Gastrocnemius medialis (tissue), 4 donors: ENCODE measurements at regions of chr21 and their contacts with region 1.

Region 1: DNA sequence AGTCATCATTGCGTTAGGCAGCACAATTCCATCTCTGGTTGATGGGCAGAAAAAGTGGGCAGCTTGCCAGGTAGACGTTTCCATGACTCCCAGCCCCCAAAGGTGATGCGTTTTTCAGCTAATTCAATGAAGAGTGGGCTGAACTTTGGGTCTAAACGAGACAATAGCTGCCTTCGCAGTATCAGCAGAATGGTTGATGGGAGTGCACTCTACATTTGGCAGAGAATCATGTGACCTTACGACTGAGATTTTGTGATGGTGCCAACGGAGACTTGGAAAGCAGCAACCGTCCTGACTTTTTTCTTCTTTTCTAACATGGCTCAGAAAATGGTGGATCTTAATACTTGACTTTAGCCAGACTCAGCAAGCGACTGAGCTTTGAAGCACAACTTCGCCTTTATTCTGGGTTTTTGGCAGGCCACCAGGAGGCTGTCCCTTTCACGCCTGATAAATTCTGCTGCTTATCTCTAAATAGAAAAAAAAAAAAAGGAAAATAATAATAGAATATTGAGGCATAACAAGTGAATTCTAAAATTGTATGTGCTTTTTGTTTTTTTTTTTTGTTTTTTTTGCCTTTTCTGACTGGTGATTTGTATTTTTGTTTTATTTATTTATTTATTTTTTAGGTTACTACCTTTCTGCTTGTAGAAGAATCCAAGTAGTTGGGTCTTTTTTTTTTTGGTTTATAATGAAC is 804.8 kb downstream of the USP25 start:
- DNase-seq: peak; percentile 66 to 75
- ATAC-seq: peak; percentile 68 to 69
- H3K4me3 ChIP-seq: peak overlapping the region; percentile 47 to 64 (median 58)
- H3K27ac ChIP-seq: peak overlapping the region; percentile 84 to 90 (median 88)
- H3K4me1 ChIP-seq: peaks cover 17 to 27% of the 10 kb centered on the region in 2 donors
- H3K27me3 ChIP-seq: no peaks in the 10 kb centered on the region
- CTCF ChIP-seq: peak in 1 of 5 experiments; percentile 9
- POLR2A ChIP-seq: no peak

Region 2: DNA sequence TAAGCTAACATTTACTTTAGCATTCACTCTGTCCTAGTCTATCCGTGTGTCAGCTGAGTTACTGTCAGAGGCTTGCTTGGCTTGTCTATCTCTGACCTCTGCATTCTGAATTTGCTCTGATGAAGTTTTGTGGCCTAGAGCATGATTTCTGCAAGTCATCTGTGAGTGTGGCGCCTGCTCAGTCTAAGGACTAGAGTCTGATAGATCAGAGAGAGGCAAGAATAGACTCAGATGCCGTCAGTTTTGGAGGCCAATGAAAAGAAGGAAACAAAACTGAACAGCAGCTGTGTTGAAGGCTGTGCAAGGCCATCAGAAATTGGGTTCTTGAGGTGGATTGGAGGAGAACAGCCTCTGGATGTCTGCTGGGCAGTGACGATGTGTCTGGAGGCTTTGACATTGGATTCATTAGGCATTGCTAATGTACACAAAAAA is 231.7 kb before region 1 on chr21:
- in situ Hi-C with region 1: no loop called
- intact Hi-C with region 1: loop called (anchors 5 kb)
- DNase-seq: peak; percentile 62 to 76
- ATAC-seq: peak; percentile 89 to 93
- H3K4me3 ChIP-seq: peak overlapping the region in 3 of 4 donors; percentile 5 to 31 (median 26)
- H3K27ac ChIP-seq: peak overlapping the region; percentile 78 to 85 (median 82)
- H3K4me1 ChIP-seq: peaks cover 15 to 20% of the 10 kb centered on the region in 2 donors
- H3K27me3 ChIP-seq: no peaks in the 10 kb centered on the region
- CTCF ChIP-seq: no peak
- POLR2A ChIP-seq: peak in 1 of 2 donors; percentile 39

Region 3: DNA sequence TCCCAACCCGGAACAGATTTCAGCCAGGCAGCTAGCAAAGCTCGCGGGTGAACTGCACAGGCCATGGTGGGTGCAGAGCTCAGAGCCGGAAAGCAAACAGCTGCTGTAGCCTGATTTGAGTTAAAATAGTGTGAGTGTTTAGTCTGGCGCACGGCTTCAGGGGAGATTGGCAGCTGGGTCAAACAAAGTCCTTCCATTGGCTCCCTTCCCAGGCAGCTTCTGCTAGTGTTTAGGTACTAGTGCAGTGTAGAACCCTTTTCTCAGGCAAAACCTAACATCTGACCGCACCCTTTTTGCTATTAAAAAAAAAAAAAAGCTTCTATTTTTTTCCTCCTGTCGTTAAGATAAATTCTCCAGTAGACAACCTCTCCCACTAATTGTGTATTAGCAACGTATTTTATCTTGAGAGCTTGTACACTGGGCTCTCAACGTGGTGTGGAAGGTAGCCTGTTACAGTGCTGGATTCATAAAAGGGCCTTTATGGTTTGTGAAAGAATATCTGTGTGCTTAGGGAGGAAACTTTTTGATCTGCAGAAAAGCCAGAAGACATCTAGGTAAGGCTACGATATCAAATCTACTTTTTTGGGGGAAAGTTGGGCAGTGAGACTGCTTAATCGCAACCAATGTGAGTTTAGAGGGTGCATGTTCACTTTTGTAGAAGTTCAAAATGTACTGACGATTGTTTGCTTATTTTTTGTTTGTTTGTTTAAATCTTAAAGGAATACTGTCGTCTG is 115.2 kb before region 1 on chr21:
- in situ Hi-C with region 1: loop called in 2 of 4 experiments (anchors 5 to 10 kb)
- intact Hi-C with region 1: loop called (anchors 1 kb)
- DNase-seq: peak; percentile 52 to 59
- ATAC-seq: peak; percentile 64 to 66
- H3K4me3 ChIP-seq: peak overlapping the region; percentile 51 to 60 (median 56)
- H3K27ac ChIP-seq: peak overlapping the region; percentile 86 to 91 (median 90)
- H3K4me1 ChIP-seq: peaks cover 4 to 15% of the 10 kb centered on the region in 2 donors
- H3K27me3 ChIP-seq: no peaks in the 10 kb centered on the region
- CTCF ChIP-seq: no peak
- POLR2A ChIP-seq: no peak

Region 4: GRCh38 chr21:16563111-16563510 is 28.6 kb after region 1 on chr21:
- in situ Hi-C with region 1: no loop called
- intact Hi-C with region 1: no loop called
- DNase-seq: no peak
- ATAC-seq: no peak
- H3K4me3 ChIP-seq: no peak overlapping the region
- H3K27ac ChIP-seq: no peak overlapping the region
- H3K4me1 ChIP-seq: peaks cover 0 to 2% of the 10 kb centered on the region in 2 donors
- H3K27me3 ChIP-seq: no peaks in the 10 kb centered on the region
- CTCF ChIP-seq: no peak
- POLR2A ChIP-seq: no peak

Region 5: GRCh38 chr21:16573578-16573977 is 39.0 kb after region 1 on chr21:
- in situ Hi-C with region 1: no loop called
- intact Hi-C with region 1: loop called (anchors 5 kb)
- DNase-seq: no peak
- ATAC-seq: no peak
- H3K4me3 ChIP-seq: no peak overlapping the region
- H3K27ac ChIP-seq: no peak overlapping the region
- H3K4me1 ChIP-seq: peaks cover 33% of the 10 kb centered on the region in 2 donors
- H3K27me3 ChIP-seq: no peaks in the 10 kb centered on the region
- CTCF ChIP-seq: no peak
- POLR2A ChIP-seq: no peak

Region 6: DNA sequence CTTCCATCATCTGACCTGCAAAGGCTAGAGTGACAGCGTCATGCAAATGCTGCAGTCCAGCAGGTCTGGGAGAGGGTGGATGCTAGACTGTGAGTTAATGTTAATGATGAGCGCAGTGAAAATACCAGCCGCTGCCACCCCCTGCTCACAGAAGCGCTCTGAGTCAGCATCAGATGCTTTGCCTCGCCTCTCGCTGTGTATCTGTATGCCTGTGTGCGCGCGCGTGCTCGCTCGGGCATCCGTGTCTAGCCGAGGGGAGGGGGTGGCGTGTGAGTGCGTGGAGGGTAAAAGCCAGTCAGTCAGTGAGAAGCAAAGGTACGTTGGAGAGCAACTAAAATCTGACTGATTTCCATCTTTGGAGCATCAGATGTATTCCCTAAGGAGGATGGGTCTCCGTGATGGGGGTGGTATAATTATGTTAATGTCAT is 53.9 kb after region 1 on chr21:
- in situ Hi-C with region 1: loop called in 1 of 4 experiments (anchors 10 kb)
- intact Hi-C with region 1: loop called (anchors 2 kb)
- DNase-seq: peak; percentile 63 to 73
- ATAC-seq: peak; percentile 71 to 72
- H3K4me3 ChIP-seq: peak overlapping the region; percentile 47 to 55 (median 50)
- H3K27ac ChIP-seq: peak overlapping the region; percentile 74 to 80 (median 80)
- H3K4me1 ChIP-seq: peaks cover 13 to 18% of the 10 kb centered on the region in 2 donors
- H3K27me3 ChIP-seq: no peaks in the 10 kb centered on the region
- CTCF ChIP-seq: no peak
- POLR2A ChIP-seq: peak; percentile 44 to 50